ENCODE measurements at regions of chr1 and their contacts with region 1.

Region 1: DNA sequence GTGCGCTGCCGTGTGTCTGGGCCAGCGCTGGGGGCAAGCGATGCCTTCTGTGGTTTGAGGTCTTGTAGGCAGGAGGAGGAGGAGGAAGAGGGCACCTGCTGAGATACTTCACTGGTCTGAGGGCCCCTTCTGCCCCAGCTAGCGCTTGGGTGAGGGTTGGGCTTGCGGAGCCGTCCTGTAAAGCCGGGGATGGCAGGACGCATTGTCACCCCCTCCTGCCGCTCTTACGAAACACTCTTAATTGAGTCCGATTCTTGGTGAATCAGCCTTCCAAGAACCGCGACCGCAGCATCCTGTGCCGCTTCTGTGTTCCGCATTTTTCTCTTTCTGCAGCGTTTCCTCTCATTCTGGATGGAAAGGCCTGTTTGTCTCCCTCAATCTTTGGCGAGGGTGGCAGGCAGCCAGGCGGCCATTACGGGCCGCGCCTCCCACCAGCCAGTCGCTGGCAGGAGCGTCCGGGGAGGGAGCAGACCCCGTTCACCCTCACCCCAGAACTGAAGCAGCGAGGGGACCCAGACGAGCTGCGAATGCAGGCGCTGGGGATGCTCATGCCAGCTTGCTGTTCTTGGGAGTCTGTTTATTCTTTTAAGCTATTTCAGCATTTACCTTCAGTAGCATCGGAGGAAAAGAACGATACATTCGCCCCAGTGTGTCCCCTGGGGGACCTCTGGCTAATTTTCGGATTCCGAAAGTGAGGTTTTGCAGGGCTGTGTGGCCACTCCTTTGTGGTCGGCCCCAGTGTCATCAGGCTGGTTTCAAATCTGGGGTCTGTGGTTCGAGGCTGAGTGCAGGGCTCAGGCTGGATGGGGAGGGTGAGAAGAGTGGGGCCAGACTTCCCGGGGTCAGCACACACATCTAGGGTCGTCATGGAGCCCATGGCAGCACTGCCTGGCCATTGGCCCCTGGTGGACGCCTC is 62.7 kb downstream of the SKI start:
- DNase-seq: peak; percentile 91
- ATAC-seq: peak; percentile 92

Region 2: GRCh38 chr1:2233997-2234761 is 56.7 kb before region 1 on chr1:
- intact Hi-C with region 1: loop called (anchors 10 kb)
- DNase-seq: peak; percentile 91
- ATAC-seq: peak; percentile 80

Region 3: GRCh38 chr1:3247521-3248121 is 956.8 kb after region 1 on chr1:
- intact Hi-C with region 1: no loop called
- DNase-seq: no peak
- ATAC-seq: no peak